ENCODE measurements at regions of chr6 and their contacts with region 1.

Region 1: GRCh38 chr6:152267967-152268845 is 369.0 kb downstream of the SYNE1 start:
- DNase-seq: peak in 3 of 42 donors; percentile 43 to 57 (median 46)

Region 2: GRCh38 chr6:152218880-152219279 is 49.3 kb before region 1 on chr6:
- intact Hi-C with region 1: loop called (anchors 10 kb)
- DNase-seq: no peak

Measured in head of caudate nucleus (tissue), 42 donors.